CD4-positive, alpha-beta memory T cell (primary cell): ENCODE measurements at regions of chr22 and their contacts with region 1.

Region 1: GRCh38 chr22:31290494-31291471 is 1.5 kb downstream of the PIK3IP1 start:
- DNase-seq: peak; percentile 96 to 97 (median 96)
- H3K4me3 ChIP-seq: peak overlapping the region; percentile 89 to 99
- H3K4me3 Mint-ChIP-seq: peak overlapping the region; percentile 95 to 100 (median 98)
- H3K27ac ChIP-seq: peak overlapping the region; percentile 100
- H3K27ac Mint-ChIP-seq: peak overlapping the region; percentile 99 to 100 (median 100)
- H3K4me1 ChIP-seq: peaks cover 72% of the 10 kb centered on the region
- H3K4me1 Mint-ChIP-seq: peaks cover 41 to 83% (median 60%) of the 10 kb centered on the region in 4 donors
- H3K27me3 ChIP-seq: no peaks in the 10 kb centered on the region
- H3K27me3 Mint-ChIP-seq: no peaks in the 10 kb centered on the region

Region 2: GRCh38 chr22:30305519-30305905 is 985.3 kb before region 1 on chr22:
- CTCF ChIA-PET with region 1: no interaction called
- POLR2A ChIA-PET with region 1: no interaction called
- intact Hi-C with region 1: loop called (anchors 5 kb)
- DNase-seq: peak; percentile 62 to 72 (median 65)
- H3K4me3 ChIP-seq: peak overlapping the region; percentile 60 to 64
- H3K4me3 Mint-ChIP-seq: peak overlapping the region; percentile 67 to 86 (median 82)
- H3K27ac ChIP-seq: peak overlapping the region; percentile 64
- H3K27ac Mint-ChIP-seq: peak overlapping the region; percentile 81 to 98 (median 95)
- H3K4me1 ChIP-seq: peaks cover 100% of the 10 kb centered on the region
- H3K4me1 Mint-ChIP-seq: peaks cover 74 to 100% (median 91%) of the 10 kb centered on the region in 4 donors
- H3K27me3 ChIP-seq: no peaks in the 10 kb centered on the region
- H3K27me3 Mint-ChIP-seq: no peaks in the 10 kb centered on the region

Region 3: GRCh38 chr22:31107178-31107893 is 183.4 kb before region 1 on chr22 and contains the start of gene SELENOM:
- CTCF ChIA-PET with region 1: interaction called, 5 read pairs
- POLR2A ChIA-PET with region 1: interaction called, 34 read pairs
- intact Hi-C with region 1: loop called (anchors 5 kb)
- DNase-seq: peak; percentile 84 to 90 (median 85)
- H3K4me3 ChIP-seq: peak within 1 kb of the TSS; percentile 80 to 97
- H3K4me3 Mint-ChIP-seq: peak within 1 kb of the TSS; percentile 89 to 97 (median 94)
- H3K27ac ChIP-seq: peak within 1 kb of the TSS; percentile 62
- H3K27ac Mint-ChIP-seq: peak within 1 kb of the TSS; percentile 86 to 96 (median 94)
- H3K4me1 ChIP-seq: peaks cover 20% of the 10 kb centered on the region
- H3K4me1 Mint-ChIP-seq: peaks cover 17 to 31% (median 24%) of the 10 kb centered on the region in 4 donors
- H3K27me3 ChIP-seq: no peaks in the 10 kb centered on the region
- H3K27me3 Mint-ChIP-seq: no peaks in the 10 kb centered on the region
- total RNA-seq, gene SELENOM: 64.2 to 68.6 TPM

Region 4: DNA sequence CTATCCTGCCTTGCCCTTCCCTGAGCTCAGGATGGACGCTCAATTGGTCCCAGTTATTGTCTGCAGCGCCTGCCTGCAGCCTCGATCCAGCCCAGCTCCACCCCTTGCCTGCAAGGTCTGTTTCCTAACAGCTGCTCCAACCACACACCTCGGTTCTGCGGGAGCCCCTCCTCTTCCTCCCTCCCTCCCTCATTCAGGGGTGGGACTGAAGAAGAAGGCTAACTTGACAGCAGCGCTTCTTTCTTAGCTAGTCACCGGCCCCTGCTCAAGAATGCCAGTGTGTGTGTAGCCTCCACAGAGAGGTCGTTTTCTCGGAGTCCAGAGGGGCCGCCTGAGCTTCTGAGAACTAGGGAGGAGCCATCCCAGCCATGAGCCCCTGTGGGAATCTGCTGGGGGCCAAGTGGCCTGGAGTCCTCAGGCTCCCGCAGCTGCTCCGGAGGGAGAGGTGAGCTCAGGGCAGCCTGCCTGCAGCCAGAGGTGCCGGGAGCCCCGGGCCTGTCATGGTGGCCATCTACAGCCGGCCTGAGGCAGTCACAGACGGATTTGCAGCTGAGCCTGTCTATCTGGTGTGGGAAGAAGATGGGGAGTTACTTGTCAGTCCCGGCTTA is 42.5 kb before region 1 on chr22:
- CTCF ChIA-PET with region 1: no interaction called
- POLR2A ChIA-PET with region 1: interaction called, 37 read pairs
- intact Hi-C with region 1: no loop called
- DNase-seq: peak; percentile 61 to 81 (median 69)
- H3K4me3 ChIP-seq: no peak overlapping the region
- H3K4me3 Mint-ChIP-seq: peak overlapping the region; percentile 22 to 85 (median 78)
- H3K27ac ChIP-seq: no peak overlapping the region
- H3K27ac Mint-ChIP-seq: peak overlapping the region in 6 of 7 donors; percentile 61 to 87 (median 78)
- H3K4me1 ChIP-seq: peaks cover 42% of the 10 kb centered on the region
- H3K4me1 Mint-ChIP-seq: peaks cover 22 to 50% (median 27%) of the 10 kb centered on the region in 4 donors
- H3K27me3 ChIP-seq: no peaks in the 10 kb centered on the region
- H3K27me3 Mint-ChIP-seq: no peaks in the 10 kb centered on the region

Region 5: DNA sequence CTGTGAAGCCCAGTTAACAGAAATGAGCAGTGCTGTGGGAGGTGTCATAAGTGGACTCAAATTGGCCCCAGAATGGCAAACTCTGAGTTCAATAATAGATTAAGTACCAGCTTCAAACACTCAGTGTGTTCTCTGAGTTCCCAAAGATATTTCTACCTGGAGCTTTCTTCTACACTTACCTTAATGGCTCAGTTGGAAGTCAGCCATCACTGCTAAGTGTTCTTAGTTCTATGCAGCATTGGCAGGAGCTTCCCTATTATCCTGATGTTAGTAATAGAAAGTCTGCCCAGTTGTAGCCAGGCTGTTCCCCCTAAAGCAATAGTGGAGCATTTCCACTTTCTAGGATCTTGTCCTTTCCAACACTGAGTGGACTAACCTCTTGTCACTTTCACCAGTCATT is 11.2 kb after region 1 on chr22:
- CTCF ChIA-PET with region 1: interaction called, 5 read pairs
- POLR2A ChIA-PET with region 1: interaction called, 1,203 read pairs
- intact Hi-C with region 1: no loop called
- DNase-seq: no peak
- H3K4me3 ChIP-seq: no peak overlapping the region
- H3K4me3 Mint-ChIP-seq: no peak overlapping the region
- H3K27ac ChIP-seq: no peak overlapping the region
- H3K27ac Mint-ChIP-seq: no peak overlapping the region
- H3K4me1 ChIP-seq: peaks cover 26% of the 10 kb centered on the region
- H3K4me1 Mint-ChIP-seq: peaks cover 30 to 52% (median 42%) of the 10 kb centered on the region in 4 donors
- H3K27me3 ChIP-seq: no peaks in the 10 kb centered on the region
- H3K27me3 Mint-ChIP-seq: no peaks in the 10 kb centered on the region

Region 6: DNA sequence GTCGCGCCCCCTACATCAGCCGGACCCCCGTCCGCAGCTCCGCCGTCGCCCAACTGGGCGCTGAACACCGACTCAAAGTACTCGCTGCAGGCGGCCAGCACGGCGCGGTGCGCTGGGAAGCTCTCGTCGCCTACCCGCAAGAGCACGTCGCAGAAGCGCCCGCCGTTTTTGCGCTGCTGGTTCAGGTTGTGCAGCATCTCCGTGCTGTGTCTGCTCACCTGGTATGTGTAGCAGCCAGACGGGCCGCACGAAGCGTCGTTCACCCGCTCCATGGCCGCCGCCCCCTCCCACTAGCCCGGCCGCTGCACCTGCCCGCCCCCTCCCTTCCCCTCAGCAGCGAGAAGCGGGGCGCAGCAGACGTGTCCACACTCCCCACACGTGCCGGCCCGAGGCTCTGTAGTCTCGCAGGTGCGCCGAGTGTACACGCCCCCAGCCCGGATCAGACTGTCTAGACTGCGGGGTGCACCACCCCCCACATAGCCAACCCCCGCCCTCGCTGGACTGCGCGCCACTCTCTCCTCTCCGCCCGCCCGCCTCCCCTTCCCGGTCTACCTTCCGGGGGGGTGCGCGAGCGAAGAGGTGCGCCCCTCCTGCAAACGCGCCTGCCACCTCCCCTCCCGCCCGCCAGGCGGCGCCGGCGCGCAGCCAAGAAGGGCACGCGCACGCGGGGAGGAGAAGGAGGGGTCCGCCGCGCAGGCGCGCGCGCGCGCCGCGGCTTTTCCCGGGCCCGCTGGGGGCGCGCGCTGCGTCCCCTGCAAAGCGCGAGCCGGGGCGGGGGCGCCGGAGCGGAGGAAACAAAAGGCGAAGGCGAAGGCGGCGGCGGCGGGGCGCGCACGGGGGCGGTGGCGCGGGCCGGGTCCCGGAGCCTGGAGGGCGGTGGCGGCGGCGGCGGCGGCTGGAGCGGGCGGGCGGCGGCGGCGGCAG is 54.8 kb after region 1 on chr22:
- CTCF ChIA-PET with region 1: interaction called, 6 read pairs
- POLR2A ChIA-PET with region 1: interaction called, 179 read pairs
- intact Hi-C with region 1: loop called (anchors 1 kb)
- DNase-seq: peak; percentile 91 to 94 (median 92)
- H3K4me3 ChIP-seq: peak overlapping the region; percentile 17 to 73
- H3K4me3 Mint-ChIP-seq: peak overlapping the region; percentile 85 to 98 (median 89)
- H3K27ac ChIP-seq: peak overlapping the region; percentile 56
- H3K27ac Mint-ChIP-seq: peak overlapping the region; percentile 78 to 96 (median 92)
- H3K4me1 ChIP-seq: peaks cover 52% of the 10 kb centered on the region
- H3K4me1 Mint-ChIP-seq: peaks cover 35 to 60% (median 43%) of the 10 kb centered on the region in 4 donors
- H3K27me3 ChIP-seq: no peaks in the 10 kb centered on the region
- H3K27me3 Mint-ChIP-seq: no peaks in the 10 kb centered on the region